PC-3 (cell line): ENCODE measurements at regions of chr1 and their contacts with region 1.

Region 1: DNA sequence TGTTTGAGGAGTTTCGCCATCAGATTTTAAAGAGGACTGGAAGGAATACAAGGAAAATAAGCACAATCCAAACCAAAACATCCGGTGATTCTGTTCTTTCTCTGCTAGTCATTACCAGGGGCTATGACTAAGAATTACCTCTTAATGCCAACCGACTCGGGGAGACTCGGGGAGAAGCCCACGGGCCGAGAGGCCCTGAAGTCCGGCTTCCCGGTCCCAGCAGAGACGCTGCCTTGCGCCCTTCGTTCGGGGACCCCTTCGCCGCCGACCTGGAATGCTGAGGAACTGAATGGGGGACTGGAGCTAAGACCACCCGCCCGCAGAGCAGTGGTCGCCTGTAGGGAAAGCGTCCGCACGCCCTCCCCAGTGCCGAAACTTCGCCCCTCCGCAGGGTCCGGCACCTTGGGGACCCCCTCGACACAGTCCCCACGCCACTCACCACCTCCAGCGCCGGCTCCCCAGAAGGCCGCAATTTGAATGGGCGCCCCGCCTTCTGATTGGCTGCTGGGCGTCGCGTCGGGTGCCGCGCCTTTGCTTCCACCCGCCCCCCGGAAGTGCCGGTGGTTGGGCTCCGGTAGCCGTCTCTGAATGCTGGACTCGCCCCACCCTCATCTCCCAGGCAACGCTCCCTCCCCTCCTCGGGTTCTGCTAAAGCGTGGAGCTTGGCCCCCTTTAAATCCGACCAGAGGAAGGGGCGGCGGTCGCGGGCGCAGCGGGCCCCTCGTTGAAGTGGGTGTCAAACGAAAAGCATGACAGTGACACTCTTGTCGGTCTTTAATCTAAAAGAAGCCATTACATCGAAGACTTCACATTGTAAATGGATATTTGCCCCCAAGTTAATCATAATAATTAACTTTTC is at the start of gene KIF14:
- DNase-seq: peak; percentile 98
- ATAC-seq: peak; percentile 97
- H3K4me3 ChIP-seq: peak within 1 kb of the TSS; percentile 82
- H3K27ac ChIP-seq: peak within 1 kb of the TSS; percentile 74
- H3K4me1 ChIP-seq: peaks cover 9% of the 10 kb centered on the region
- H3K27me3 ChIP-seq: no peaks in the 10 kb centered on the region
- CTCF ChIP-seq: no peak
- total RNA-seq, gene KIF14: 23.6 and 23.7 TPM in 2 replicates

Region 2: DNA sequence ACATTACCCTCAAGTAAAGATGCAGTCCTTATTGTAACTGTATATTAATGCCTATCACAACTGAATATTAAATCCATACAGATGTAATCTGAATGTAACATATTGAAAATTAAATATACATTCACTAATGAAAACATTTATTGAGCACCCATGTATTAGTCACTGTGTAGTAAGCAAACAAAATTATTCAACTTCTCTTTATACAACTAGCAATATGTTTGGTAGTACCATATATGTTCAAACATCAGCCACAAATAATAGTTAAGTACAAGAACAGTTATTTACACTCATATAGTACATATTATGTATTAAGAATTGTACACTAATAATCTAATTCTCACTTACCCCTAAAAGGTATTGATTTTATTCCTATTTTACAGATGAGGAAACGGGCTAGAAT is 17.9 kb before region 1 on chr1:
- CTCF ChIA-PET with region 1: interaction called, 10 read pairs
- POLR2A ChIA-PET with region 1: interaction called, 3 read pairs
- intact Hi-C with region 1: no loop called
- DNase-seq: no peak
- ATAC-seq: peak; percentile 93
- H3K4me3 ChIP-seq: no peak overlapping the region
- H3K27ac ChIP-seq: no peak overlapping the region
- H3K4me1 ChIP-seq: no peaks in the 10 kb centered on the region
- H3K27me3 ChIP-seq: no peaks in the 10 kb centered on the region
- CTCF ChIP-seq: no peak

Region 3: DNA sequence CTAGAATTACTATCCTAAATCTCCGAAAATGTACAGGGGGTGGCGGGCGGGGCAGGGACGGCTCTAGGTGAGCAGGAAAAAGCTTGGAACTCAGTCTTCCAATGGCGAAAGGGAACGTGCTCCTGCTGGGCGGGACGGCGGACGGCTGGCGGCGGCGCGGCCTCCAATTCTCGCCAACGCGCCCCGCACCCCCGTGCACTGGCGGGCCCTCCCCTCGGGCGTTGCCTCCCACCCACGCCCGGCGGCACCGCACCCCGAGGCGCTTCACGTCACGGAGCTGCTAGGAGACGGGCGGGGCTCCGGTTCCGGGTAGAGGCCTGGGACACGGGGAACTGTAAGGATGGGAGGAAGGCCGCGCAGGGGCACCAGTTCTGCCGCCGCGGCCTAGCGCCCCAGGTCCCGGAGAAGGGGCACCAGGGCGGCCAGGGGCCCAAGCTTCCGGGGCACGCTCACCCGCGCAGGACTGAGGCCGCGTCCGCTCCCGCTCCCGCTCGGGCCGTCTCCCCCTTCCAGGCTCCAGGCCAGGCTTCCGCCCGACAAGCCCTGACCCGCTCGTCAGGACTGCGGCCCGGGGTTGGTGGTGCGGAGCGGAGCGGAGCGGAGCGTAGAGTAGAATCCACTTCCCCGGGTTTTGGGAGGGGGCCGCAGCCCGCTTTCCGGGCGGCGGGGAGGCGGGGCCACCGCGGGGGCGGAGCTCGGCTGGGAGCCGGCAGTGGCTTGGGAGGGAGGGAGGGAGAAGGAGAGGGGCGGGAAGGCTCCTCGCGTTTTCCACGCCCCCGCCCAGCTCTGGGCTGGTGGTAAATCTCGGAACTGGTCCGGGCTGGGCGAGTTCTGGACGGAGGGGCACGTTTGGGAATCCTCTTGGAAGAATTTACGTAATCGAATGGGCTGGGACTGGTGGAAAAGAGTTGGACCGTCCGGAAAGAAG is 49.1 kb after region 1 on chr1 and contains the start of gene DDX59:
- CTCF ChIA-PET with region 1: interaction called, 19 read pairs
- POLR2A ChIA-PET with region 1: interaction called, 22 read pairs
- intact Hi-C with region 1: loop called (anchors 1 kb)
- DNase-seq: peak; percentile 100
- ATAC-seq: peak; percentile 76
- H3K4me3 ChIP-seq: peak within 1 kb of the TSS; percentile 86
- H3K27ac ChIP-seq: peak within 1 kb of the TSS; percentile 97
- H3K4me1 ChIP-seq: peaks cover 28% of the 10 kb centered on the region
- H3K27me3 ChIP-seq: no peaks in the 10 kb centered on the region
- CTCF ChIP-seq: no peak
- total RNA-seq, gene DDX59: 24.6 and 29.4 TPM in 2 replicates

Region 4: DNA sequence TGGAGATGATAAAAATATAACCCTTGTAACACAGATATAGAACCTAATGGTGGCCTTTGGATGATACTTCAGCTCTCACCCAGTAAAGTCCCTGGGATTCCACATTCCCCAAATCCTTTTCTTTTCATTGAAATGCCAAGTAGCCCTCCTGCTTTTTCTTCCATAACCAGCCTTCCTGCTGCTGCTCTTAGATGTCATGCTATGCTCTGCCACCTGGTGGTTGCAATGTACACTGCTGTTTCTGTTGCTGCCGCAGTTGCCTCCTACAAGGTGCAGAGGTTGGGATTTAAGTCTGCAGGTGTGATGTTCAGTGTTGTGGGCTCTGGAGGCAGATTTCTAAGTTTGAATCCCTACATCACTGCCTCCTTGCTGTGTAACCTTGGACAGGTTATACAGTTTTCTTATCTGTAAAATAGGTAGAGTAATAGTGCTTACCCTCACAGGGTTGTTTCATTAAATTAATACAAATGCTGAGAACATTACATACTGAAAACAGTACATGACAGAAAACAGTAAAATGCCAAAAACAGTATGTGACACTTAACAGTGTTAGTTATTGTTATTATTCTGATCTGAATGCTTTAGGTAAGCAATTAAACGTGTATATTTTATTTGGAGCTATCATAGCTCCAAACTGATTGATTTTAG is 182.5 kb after region 1 on chr1:
- CTCF ChIA-PET with region 1: interaction called, 22 read pairs
- POLR2A ChIA-PET with region 1: interaction called, 3 read pairs
- intact Hi-C with region 1: loop called (anchors 1 kb)
- DNase-seq: peak; percentile 98
- ATAC-seq: peak; percentile 100
- H3K4me3 ChIP-seq: no peak overlapping the region
- H3K27ac ChIP-seq: no peak overlapping the region
- H3K4me1 ChIP-seq: no peaks in the 10 kb centered on the region
- H3K27me3 ChIP-seq: no peaks in the 10 kb centered on the region
- CTCF ChIP-seq: peak; percentile 100

Region 5: DNA sequence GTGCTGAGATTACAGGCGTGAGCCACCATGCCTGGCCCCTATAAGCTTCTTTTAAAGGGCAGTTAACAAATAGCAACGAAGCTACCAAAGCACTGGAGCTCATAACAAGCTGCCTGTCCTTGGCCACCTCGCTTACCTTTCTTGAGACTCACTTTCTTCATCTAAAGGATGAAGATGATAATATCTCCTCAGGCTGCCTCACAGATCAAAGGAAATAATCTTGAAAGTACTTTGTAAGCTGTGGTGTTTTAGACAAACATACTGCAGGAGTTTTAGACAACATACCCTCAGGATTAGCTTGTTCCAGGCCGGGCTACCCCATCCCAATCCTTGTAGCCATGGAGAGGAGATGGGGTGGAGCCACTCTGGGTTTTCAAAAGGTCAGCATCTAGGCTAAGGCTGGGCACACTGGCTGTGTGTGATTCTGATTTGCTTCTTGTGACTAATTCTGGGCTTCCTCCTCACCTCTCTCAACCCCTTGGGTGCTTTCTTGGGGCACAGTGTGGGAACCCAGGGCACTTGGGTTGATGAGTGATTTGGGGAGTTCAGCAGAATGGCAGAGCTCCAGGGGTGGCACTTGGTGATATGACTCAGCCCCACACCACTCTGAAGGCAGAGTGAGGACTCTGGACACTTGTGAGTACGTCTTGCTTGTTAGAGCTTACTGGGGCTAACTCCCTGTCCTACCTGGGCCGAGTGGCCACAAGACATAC is 257.5 kb after region 1 on chr1:
- CTCF ChIA-PET with region 1: interaction called, 4 read pairs
- POLR2A ChIA-PET with region 1: interaction called, 14 read pairs
- intact Hi-C with region 1: no loop called
- DNase-seq: no peak
- ATAC-seq: 0 out of 2 replicates have a peak, but pooled peaks have one; percentile 10
- H3K4me3 ChIP-seq: no peak overlapping the region
- H3K27ac ChIP-seq: no peak overlapping the region
- H3K4me1 ChIP-seq: no peaks in the 10 kb centered on the region
- H3K27me3 ChIP-seq: peaks cover 62% of the 10 kb centered on the region
- CTCF ChIP-seq: no peak

Region 6: DNA sequence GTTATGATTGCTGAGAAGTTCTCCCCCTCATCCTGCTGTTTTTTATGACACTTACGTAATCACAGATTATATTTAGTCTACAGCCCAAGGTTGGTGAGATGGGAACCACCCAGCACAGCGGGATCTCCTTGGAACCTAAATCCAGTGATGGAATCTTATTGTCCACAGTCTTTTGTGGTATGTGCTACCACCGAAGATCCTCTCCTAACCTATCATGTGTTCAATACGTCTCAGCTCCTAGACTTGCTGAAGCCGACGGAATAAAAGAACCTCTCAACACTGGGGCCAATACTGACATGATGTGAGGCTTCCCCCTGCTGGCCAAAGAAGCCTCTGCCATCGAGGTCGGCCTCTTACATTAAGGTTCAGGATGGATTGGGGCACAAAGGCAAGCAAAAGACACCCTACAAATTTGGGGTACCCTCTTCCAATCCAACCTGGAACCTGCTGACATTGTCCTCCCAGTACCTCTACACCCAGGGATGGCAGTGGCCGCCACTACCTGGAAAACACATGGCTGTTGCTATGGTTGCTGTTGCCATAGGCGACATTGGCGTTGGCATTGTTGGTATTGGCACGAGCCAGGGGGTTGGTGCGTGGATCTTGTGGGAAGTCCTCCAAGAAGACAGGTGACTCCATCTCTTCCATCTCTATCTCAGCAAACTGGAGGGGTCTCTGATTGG is 422.4 kb after region 1 on chr1:
- CTCF ChIA-PET with region 1: no interaction called
- POLR2A ChIA-PET with region 1: no interaction called
- intact Hi-C with region 1: loop called (anchors 5 kb)
- DNase-seq: peak; percentile 92
- ATAC-seq: peak; percentile 94
- H3K4me3 ChIP-seq: no peak overlapping the region
- H3K27ac ChIP-seq: no peak overlapping the region
- H3K4me1 ChIP-seq: no peaks in the 10 kb centered on the region
- H3K27me3 ChIP-seq: peaks cover 15% of the 10 kb centered on the region
- CTCF ChIP-seq: peak; percentile 100